Heart right ventricle (tissue), 16 donors: ENCODE measurements at regions of chr14 and their contacts with region 1.

Region 1: DNA sequence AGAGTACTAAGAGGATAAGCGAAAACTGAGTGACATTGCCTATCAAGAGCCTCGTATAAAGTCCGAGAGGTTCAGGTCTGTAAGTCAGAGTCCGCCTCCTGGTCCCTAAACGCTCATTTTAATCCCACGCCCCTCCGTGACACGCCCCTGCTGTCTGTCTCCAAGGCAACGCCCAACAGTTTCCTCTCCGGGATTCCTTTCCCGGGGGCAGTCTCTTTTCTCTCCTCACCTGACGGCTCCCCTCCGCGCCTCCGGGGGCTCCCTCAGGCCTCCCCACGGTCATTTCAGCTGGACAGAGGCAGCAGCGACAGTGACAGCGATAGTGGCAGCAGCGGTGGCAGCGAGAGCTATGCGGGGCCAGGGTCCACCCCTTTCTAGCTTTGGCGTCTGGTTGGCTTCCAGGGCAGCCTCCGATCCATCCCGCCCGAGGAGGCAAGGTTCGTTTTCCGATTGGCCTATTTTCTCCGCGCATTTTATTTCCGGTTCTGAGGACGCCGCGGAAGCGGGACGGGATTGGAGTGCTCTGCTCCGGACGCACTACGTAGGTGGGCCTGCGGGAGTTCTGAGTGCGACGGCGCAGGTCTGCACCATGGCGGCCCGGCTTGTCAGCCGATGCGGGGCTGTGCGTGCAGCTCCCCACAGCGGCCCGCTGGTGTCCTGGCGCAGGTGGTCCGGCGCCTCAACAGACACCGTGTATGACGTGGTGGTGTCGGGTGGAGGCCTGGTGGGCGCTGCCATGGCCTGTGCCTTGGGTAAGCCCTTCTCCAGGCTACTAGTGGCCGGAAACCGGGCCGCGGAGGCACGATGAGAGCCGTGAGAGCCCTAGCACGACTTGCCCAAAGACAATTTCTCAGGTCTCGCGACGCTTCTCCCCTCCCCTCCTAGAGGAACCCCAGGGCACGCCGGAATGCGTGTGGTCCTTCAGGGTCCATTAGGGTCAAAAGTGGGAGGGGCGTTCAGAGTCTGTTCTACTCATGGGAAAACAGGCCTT is at the starts of genes COQ6 and FAM161B:
- DNase-seq: peak; percentile 90 to 96
- ATAC-seq: peak; percentile 98 to 99 (median 98)
- H3K4me3 ChIP-seq: peak within 1 kb of the TSS; percentile 48 to 94 (median 80)
- H3K27ac ChIP-seq: peak within 1 kb of the TSS; percentile 57 to 98 (median 94)
- H3K4me1 ChIP-seq: peaks cover 3 to 26% (median 16%) of the 10 kb centered on the region in 9 donors
- H3K27me3 ChIP-seq: no peaks in the 10 kb centered on the region
- CTCF ChIP-seq: peak in 2 of 9 donors; percentile 25 to 36
- total RNA-seq, gene COQ6: 29.4 to 52.2 (median 48.0) TPM
- total RNA-seq, gene FAM161B: 2.9 to 6.5 (median 4.2) TPM

Region 2: GRCh38 chr14:73825551-73826188 is 124.4 kb before region 1 on chr14:
- intact Hi-C with region 1: no loop called
- DNase-seq: peak; percentile 89 to 92
- ATAC-seq: peak; percentile 91 to 97 (median 96)
- H3K4me3 ChIP-seq: peak overlapping the region in 1 of 10 donors; percentile 6
- H3K27ac ChIP-seq: peak overlapping the region in 4 of 10 donors; percentile 2 to 35 (median 8)
- H3K4me1 ChIP-seq: peaks cover 0 to 20% (median 13%) of the 10 kb centered on the region in 9 donors
- H3K27me3 ChIP-seq: no peaks in the 10 kb centered on the region
- CTCF ChIP-seq: peak; percentile 88 to 97 (median 95)

Region 3: GRCh38 chr14:73870525-73871235 is 79.4 kb before region 1 on chr14:
- intact Hi-C with region 1: no loop called
- DNase-seq: no peak
- ATAC-seq: no peak
- H3K4me3 ChIP-seq: no peak overlapping the region
- H3K27ac ChIP-seq: no peak overlapping the region
- H3K4me1 ChIP-seq: no peaks in the 10 kb centered on the region
- H3K27me3 ChIP-seq: no peaks in the 10 kb centered on the region
- CTCF ChIP-seq: no peak

Region 4: GRCh38 chr14:75609606-75610471 is 1659.8 kb after region 1 on chr14:
- intact Hi-C with region 1: loop called in 1 of 10 experiments (anchors 5 kb)
- DNase-seq: no peak
- ATAC-seq: peak in 4 of 8 donors; percentile 17 to 66 (median 42)
- H3K4me3 ChIP-seq: no peak overlapping the region
- H3K27ac ChIP-seq: peak overlapping the region in 3 of 10 donors; percentile 16 to 81 (median 31)
- H3K4me1 ChIP-seq: peaks cover 0 to 79% (median 26%) of the 10 kb centered on the region in 9 donors
- H3K27me3 ChIP-seq: no peaks in the 10 kb centered on the region
- CTCF ChIP-seq: no peak